ENCODE measurements at regions of chr15 and their contacts with region 1.

Region 1: DNA sequence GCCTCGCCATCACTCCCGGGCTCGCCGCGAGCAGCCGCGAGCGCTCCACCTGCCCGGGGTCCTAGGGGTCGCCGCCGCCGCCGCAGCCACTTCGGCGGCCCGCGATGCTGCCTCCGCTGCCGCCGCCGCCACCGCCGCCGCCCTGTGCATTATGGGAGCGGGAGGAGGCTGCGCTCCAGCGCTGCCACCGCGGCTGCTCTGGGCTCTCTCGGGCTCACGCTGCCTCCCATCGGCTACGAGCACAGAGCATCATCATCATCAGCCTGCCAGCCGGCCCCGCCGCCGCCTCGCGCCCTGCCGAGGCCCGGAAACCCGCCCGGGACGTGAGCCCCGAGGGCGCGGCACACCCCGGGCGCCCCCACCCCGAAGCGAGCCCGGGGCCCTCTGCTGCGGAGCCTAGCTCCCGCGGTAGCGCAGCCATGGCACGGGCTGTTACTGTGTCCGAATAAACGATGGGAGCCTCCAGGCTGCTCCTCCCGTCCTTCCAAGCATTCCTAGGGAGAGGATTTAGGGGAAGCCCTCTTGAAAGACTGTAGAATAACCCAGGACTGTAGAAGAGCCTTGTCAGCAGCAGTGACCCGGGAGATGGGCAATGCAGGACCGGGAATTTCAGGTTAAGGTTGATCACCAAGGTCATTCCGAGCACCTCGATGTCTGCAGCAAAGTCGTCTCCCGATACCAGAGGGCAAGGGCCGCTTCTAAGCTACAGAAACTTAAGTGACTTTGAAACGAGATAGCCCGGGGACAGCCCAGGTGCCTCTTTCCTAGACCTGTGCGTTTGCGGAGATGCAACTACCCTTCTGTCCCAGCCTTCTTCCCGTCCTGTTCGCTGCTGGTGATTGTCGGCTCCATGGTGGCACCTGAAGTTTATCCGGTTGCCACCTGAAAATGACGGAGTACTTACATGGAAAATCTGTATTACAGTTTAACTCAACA is 579 bp upstream of the MYO5A start:
- DNase-seq: no peak
- ATAC-seq: peak; percentile 79
- H3K4me3 Mint-ChIP-seq: peak overlapping the region; percentile 73
- H3K27ac Mint-ChIP-seq: peak overlapping the region; percentile 79
- H3K4me1 Mint-ChIP-seq: peaks cover 23% of the 10 kb centered on the region
- H3K27me3 Mint-ChIP-seq: no peaks in the 10 kb centered on the region
- CTCF ChIP-seq: no peak

Region 2: GRCh38 chr15:52331490-52332240 is 197.6 kb before region 1 on chr15:
- CTCF ChIA-PET with region 1: interaction called, 4 read pairs
- POLR2A ChIA-PET with region 1: no interaction called
- intact Hi-C with region 1: loop called (anchors 1 kb)
- DNase-seq: no peak
- ATAC-seq: peak; percentile 99
- H3K4me3 Mint-ChIP-seq: no peak overlapping the region
- H3K27ac Mint-ChIP-seq: peak overlapping the region; percentile 15
- H3K4me1 Mint-ChIP-seq: peaks cover 13% of the 10 kb centered on the region
- H3K27me3 Mint-ChIP-seq: no peaks in the 10 kb centered on the region
- CTCF ChIP-seq: no peak

Region 3: GRCh38 chr15:52379395-52380106 is 149.7 kb before region 1 on chr15:
- CTCF ChIA-PET with region 1: no interaction called
- POLR2A ChIA-PET with region 1: interaction called, 6 read pairs
- intact Hi-C with region 1: loop called (anchors 2 kb)
- DNase-seq: no peak
- ATAC-seq: peak; percentile 74
- H3K4me3 Mint-ChIP-seq: peak overlapping the region; percentile 47
- H3K27ac Mint-ChIP-seq: peak overlapping the region; percentile 82
- H3K4me1 Mint-ChIP-seq: peaks cover 28% of the 10 kb centered on the region
- H3K27me3 Mint-ChIP-seq: no peaks in the 10 kb centered on the region
- CTCF ChIP-seq: no peak

Region 4: DNA sequence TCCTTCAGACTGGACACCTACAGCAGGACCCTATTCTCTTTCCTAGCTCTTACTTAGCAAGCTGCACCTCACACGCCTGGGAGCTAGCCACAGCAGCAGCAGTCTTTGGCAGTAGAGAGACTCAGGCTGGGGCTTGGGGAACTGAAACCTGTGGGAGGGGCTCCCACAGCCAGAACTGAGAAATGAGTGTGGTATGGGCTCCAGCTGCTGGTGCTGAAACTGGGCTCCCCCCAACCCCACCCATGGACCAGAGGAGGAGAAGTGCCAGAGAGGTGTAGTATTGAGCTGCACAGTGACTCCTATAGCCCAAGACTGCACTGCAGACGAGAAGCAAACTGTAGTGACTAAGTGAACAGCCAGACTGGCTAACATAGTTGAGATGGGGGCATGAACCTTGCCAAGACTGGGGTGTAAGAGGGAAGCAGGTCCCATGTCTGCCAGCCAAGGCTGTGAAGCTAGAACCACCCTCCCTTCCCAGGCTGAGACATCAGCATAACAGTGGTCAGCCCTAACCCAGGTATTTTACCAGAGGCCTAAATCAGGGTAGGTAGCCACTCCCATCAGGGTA is 63.0 kb before region 1 on chr15:
- CTCF ChIA-PET with region 1: interaction called, 16 read pairs
- POLR2A ChIA-PET with region 1: interaction called, 8 read pairs
- intact Hi-C with region 1: loop called (anchors 1 kb)
- DNase-seq: peak; percentile 75
- ATAC-seq: peak; percentile 99
- H3K4me3 Mint-ChIP-seq: peak overlapping the region; percentile 25
- H3K27ac Mint-ChIP-seq: peak overlapping the region; percentile 91
- H3K4me1 Mint-ChIP-seq: peaks cover 52% of the 10 kb centered on the region
- H3K27me3 Mint-ChIP-seq: no peaks in the 10 kb centered on the region
- CTCF ChIP-seq: no peak

Region 5: GRCh38 chr15:52503788-52504496 is 25.3 kb before region 1 on chr15:
- CTCF ChIA-PET with region 1: no interaction called
- POLR2A ChIA-PET with region 1: interaction called, 8 read pairs
- intact Hi-C with region 1: loop called (anchors 1 kb)
- DNase-seq: no peak
- ATAC-seq: peak; percentile 94
- H3K4me3 Mint-ChIP-seq: peak overlapping the region; percentile 55
- H3K27ac Mint-ChIP-seq: peak overlapping the region; percentile 90
- H3K4me1 Mint-ChIP-seq: peaks cover 44% of the 10 kb centered on the region
- H3K27me3 Mint-ChIP-seq: no peaks in the 10 kb centered on the region
- CTCF ChIP-seq: no peak

Region 6: GRCh38 chr15:52568601-52569256 is 39.5 kb after region 1 on chr15 and contains the start of gene ARPP19:
- CTCF ChIA-PET with region 1: interaction called, 3 read pairs
- POLR2A ChIA-PET with region 1: interaction called, 8 read pairs
- intact Hi-C with region 1: loop called (anchors 1 kb)
- DNase-seq: peak; percentile 82
- ATAC-seq: peak; percentile 83
- H3K4me3 Mint-ChIP-seq: peak within 1 kb of the TSS; percentile 97
- H3K27ac Mint-ChIP-seq: peak within 1 kb of the TSS; percentile 100
- H3K4me1 Mint-ChIP-seq: peaks cover 49% of the 10 kb centered on the region
- H3K27me3 Mint-ChIP-seq: no peaks in the 10 kb centered on the region
- CTCF ChIP-seq: no peak
- total RNA-seq, gene ARPP19: 145 and 153 TPM in 2 replicates

Region 7: DNA sequence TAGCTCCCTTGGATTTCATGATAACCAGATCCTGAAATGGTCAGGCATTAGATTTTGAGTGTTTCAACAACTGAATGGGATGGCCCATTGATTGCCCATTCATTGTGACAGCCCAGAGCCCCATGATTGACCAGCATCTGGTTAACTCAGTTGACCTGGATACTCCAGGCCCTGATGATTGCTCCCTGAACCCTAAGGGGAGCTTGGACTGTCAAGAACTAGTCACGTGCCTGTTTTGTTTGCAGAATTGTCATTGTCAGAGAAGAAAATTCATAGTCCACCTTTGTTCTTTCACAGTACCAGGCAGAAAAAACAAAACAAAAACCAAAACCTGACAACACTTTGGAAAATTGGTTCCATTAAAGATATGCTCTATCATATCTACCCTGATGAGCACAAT is 502.2 kb after region 1 on chr15:
- CTCF ChIA-PET with region 1: no interaction called
- POLR2A ChIA-PET with region 1: no interaction called
- intact Hi-C with region 1: no loop called
- DNase-seq: no peak
- ATAC-seq: no peak
- H3K4me3 Mint-ChIP-seq: no peak overlapping the region
- H3K27ac Mint-ChIP-seq: no peak overlapping the region
- H3K4me1 Mint-ChIP-seq: no peaks in the 10 kb centered on the region
- H3K27me3 Mint-ChIP-seq: no peaks in the 10 kb centered on the region
- CTCF ChIP-seq: no peak

Measured in activated B cell treated with CpG ODN at 0.5 μM for 24 hours (primary cell).